ENCODE measurements at regions of chr15 and their contacts with region 1.

Region 1: GRCh38 chr15:85858586-85859375 is 64.1 kb upstream of the KLHL25 start:
- DNase-seq: no peak
- H3K4me3 ChIP-seq: peak overlapping the region; percentile 23
- CTCF ChIP-seq: peak; percentile 83

Region 2: GRCh38 chr15:85869124-85869523 is 10.3 kb after region 1 on chr15:
- CTCF ChIA-PET with region 1: interaction called, 11 read pairs
- POLR2A ChIA-PET with region 1: no interaction called
- DNase-seq: no peak
- H3K4me3 ChIP-seq: no peak overlapping the region
- CTCF ChIP-seq: no peak

Region 3: GRCh38 chr15:85886309-85886811 is 27.6 kb after region 1 on chr15:
- CTCF ChIA-PET with region 1: no interaction called
- POLR2A ChIA-PET with region 1: no interaction called
- DNase-seq: no peak
- H3K4me3 ChIP-seq: no peak overlapping the region
- CTCF ChIP-seq: no peak